ENCODE measurements at regions of chr6 and their contacts with region 1.

Region 1: GRCh38 chr6:24415753-24416152 is 13.0 kb downstream of the MRS2 start:
- DNase-seq: no peak
- H3K4me3 ChIP-seq: no peak overlapping the region
- H3K27ac ChIP-seq: no peak overlapping the region
- H3K4me1 ChIP-seq: no peaks in the 10 kb centered on the region
- H3K27me3 ChIP-seq: no peaks in the 10 kb centered on the region
- CTCF ChIP-seq: no peak
- EP300 ChIP-seq: no peak
- POLR2A ChIP-seq: no peak
- RAD21 ChIP-seq: no peak

Region 2: DNA sequence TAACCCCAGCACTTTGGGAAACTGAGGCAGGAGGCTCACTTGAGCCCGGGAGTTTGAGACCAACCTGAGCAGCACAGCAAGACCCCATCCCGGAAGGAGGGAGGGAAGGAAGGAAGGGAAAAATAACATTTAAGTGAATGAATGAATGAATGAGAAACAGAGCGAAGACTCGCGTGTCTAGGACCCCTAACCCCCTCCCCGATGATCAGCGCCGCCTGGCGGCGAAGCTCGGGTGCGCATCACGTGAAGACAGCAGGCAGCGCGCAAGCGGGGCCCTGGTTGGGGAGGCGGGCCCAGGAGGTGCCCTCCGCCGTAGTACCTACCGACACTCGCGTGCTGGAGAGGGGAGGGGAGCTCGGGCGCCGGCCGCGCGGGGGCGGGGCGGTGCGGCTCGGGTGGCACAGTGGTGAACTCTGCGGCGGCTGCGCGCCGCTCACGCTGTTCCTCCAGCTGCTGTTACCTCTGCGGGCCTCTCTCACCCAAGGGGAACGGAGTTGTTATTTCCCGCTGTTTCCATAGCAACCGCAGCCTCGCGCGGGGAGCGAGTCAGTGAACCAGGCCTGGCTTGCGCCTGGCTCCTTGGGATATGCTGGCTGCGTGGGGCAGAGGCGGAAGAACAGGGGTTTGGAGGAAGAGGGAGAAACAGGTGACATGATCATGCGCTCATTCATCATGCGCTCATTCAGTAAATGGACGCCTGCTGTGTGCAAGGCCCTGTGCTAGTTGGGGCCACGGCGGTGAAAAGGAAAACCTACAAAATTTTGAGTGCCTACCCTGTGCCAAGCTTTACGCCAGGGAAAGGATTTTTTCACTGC is 55.9 kb before region 1 on chr6:
- CTCF ChIA-PET with region 1: no interaction called
- POLR2A ChIA-PET with region 1: no interaction called
- DNase-seq: peak; percentile 69 to 99
- H3K4me3 ChIP-seq: peak overlapping the region; percentile 60 to 70 (median 67)
- H3K27ac ChIP-seq: 0 out of 2 replicates have a peak overlapping the region, but pooled peaks have one; percentile 13
- H3K4me1 ChIP-seq: peaks cover 0 to 3% (median 1%) of the 10 kb centered on the region in 4 experiments; a peak in 2 of 7 replicates
- H3K27me3 ChIP-seq: no peaks in the 10 kb centered on the region
- CTCF ChIP-seq: peak; percentile 83 to 93 (median 88)
- EP300 ChIP-seq: peak in 1 of 2 experiments; percentile 14; a peak in 1 of 3 replicates
- POLR2A ChIP-seq: no peak
- RAD21 ChIP-seq: peak; percentile 56 to 74

Region 3: GRCh38 chr6:24402697-24403501 is 12.9 kb before region 1 on chr6 and contains the start of gene MRS2:
- CTCF ChIA-PET with region 1: no interaction called
- POLR2A ChIA-PET with region 1: interaction called, 18 read pairs
- DNase-seq: peak; percentile 78 to 90
- H3K4me3 ChIP-seq: peak within 1 kb of the TSS; percentile 73 to 94 (median 86)
- H3K27ac ChIP-seq: peak within 1 kb of the TSS; percentile 80
- H3K4me1 ChIP-seq: peaks cover 5 to 21% (median 12%) of the 10 kb centered on the region in 4 experiments
- H3K27me3 ChIP-seq: no peaks in the 10 kb centered on the region
- CTCF ChIP-seq: no peak
- EP300 ChIP-seq: no peak
- POLR2A ChIP-seq: peak; percentile 66 to 90
- RAD21 ChIP-seq: no peak
- total RNA-seq, gene MRS2: 67.5 and 68.4 TPM in 2 replicates

Region 4: GRCh38 chr6:24547243-24547642 is 131.5 kb after region 1 on chr6:
- CTCF ChIA-PET with region 1: no interaction called
- POLR2A ChIA-PET with region 1: no interaction called
- DNase-seq: peak; percentile 31 to 54
- H3K4me3 ChIP-seq: no peak overlapping the region
- H3K27ac ChIP-seq: no peak overlapping the region
- H3K4me1 ChIP-seq: no peaks in the 10 kb centered on the region
- H3K27me3 ChIP-seq: no peaks in the 10 kb centered on the region
- CTCF ChIP-seq: peak; percentile 39 to 50 (median 46); a peak in 3 of 4 replicates
- EP300 ChIP-seq: no peak
- POLR2A ChIP-seq: no peak
- RAD21 ChIP-seq: peak; percentile 62 to 73